PC-3 (cell line): ENCODE measurements at regions of chr7 and their contacts with region 1.

Region 1: DNA sequence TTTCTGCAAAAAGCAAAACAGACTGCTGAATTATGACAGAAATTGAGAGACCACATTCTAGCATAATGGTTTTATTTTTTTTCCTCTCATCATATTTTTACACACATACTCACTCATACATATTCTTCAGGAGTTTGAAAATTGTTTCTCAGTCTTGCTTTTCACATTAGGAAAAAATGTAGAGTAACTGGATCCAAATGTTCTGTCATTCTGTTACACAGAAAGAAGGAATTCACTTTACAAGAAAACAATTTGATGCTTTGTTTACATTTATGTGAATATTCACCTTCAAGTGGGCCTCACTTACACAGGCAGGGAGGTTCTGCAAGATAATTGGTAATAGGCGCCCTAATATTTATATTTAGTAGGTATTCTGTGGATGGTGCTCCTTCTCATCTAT is 82.0 kb downstream of the ARL4A start:
- DNase-seq: peak; percentile 72
- ATAC-seq: peak; percentile 76
- H3K4me3 ChIP-seq: peak overlapping the region; percentile 21; the same call in 1 of the 2 replicates
- H3K27ac ChIP-seq: peak overlapping the region; percentile 25
- H3K4me1 ChIP-seq: peaks cover 37% of the 10 kb centered on the region
- H3K27me3 ChIP-seq: no peaks in the 10 kb centered on the region
- CTCF ChIP-seq: no peak

Region 2: GRCh38 chr7:12715372-12716133 is 53.9 kb before region 1 on chr7:
- CTCF ChIA-PET with region 1: no interaction called
- POLR2A ChIA-PET with region 1: no interaction called
- intact Hi-C with region 1: loop called (anchors 2 kb)
- DNase-seq: peak; percentile 97
- ATAC-seq: peak; percentile 89
- H3K4me3 ChIP-seq: peak overlapping the region; percentile 55
- H3K27ac ChIP-seq: peak overlapping the region; percentile 93
- H3K4me1 ChIP-seq: peaks cover 74% of the 10 kb centered on the region
- H3K27me3 ChIP-seq: no peaks in the 10 kb centered on the region
- CTCF ChIP-seq: no peak

Region 3: DNA sequence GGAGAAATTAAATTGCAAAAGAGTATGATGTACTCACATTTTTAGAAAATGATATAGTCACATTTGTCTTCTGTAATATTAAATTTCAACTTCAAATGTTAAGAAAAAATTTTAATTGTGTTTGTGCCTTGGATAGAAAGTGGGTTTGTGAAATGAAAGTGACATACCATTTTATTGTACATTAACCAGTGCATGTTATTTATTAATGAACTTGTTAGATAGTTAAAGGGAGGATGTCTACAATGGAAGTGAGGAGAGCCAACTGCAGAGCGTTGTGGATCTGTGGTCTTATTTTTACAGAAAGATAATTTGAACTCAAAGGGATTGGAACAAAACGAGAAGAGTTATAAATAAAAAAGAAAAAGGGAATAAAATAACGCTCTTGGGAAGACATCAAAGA is 209.7 kb after region 1 on chr7:
- CTCF ChIA-PET with region 1: no interaction called
- POLR2A ChIA-PET with region 1: no interaction called
- intact Hi-C with region 1: no loop called
- DNase-seq: no peak
- ATAC-seq: no peak
- H3K4me3 ChIP-seq: no peak overlapping the region
- H3K27ac ChIP-seq: no peak overlapping the region
- H3K4me1 ChIP-seq: no peaks in the 10 kb centered on the region
- H3K27me3 ChIP-seq: no peaks in the 10 kb centered on the region
- CTCF ChIP-seq: no peak

Region 4: DNA sequence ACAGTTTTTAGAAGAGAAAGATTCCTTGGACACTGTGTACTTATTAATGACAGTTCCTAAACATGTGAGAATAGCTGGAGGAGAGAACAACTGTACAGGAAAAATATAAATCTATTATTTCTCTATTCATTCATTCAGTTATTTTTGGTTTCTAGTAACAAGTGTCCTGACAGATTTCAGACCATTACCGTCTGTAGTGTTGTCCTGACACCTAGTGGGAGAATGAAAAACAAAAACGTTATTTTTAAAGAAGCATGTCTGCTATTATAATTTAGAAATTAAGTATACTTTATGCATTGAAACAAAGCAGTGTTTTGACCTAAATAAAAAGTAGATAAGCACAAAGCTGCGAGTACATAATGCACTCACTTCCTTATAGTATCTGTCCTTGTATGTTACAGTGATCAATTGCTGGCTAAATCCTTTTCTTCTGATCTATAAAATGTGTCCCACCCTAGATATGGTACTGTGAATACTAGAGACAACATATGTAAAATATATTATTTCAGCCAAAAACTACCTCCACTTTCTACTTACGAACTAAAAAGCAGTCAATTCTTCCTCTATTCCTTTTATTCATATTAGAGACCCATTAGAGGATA is 493.6 kb after region 1 on chr7:
- CTCF ChIA-PET with region 1: no interaction called
- POLR2A ChIA-PET with region 1: no interaction called
- intact Hi-C with region 1: no loop called
- DNase-seq: peak; percentile 74
- ATAC-seq: peak; percentile 70
- H3K4me3 ChIP-seq: no peak overlapping the region
- H3K27ac ChIP-seq: no peak overlapping the region
- H3K4me1 ChIP-seq: no peaks in the 10 kb centered on the region
- H3K27me3 ChIP-seq: no peaks in the 10 kb centered on the region
- CTCF ChIP-seq: peak; percentile 74